ENCODE measurements at regions of chr1 and their contacts with region 1.

Region 1: DNA sequence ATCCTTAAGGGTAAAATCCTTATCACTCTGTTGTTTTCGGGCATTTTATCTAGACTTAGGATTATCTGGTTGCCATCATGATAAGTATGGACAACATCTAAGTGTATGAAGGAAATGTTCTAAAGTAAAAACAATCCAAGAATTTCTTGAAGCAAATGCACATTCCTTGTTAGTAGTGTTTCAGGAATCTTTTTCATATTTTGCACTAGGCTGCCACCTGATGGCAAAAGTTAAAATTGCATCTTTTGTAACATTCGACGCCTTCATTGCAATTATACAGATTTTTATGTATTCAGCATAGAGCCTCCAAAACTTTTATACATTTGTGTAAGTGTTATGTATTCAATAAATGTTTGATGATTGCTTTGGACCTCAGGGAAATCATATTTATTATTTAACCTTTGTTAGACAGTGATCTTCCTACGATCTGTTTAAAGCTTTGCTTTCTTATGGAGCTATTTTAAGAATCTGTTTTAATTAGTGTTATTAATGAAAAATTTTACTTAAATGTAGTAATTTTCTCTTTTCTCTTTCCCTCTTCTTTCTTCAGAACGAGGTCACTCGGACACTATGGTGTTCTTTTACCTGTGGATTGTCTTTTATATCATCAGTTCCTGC is 49.4 kb upstream of the KIAA1614 start:
- DNase-seq: no peak
- H3K4me3 Mint-ChIP-seq: no peak overlapping the region
- H3K27ac Mint-ChIP-seq: no peak overlapping the region
- H3K4me1 Mint-ChIP-seq: no peaks in the 10 kb centered on the region
- H3K27me3 Mint-ChIP-seq: no peaks in the 10 kb centered on the region

Region 2: GRCh38 chr1:180515864-180516388 is 347.3 kb before region 1 on chr1:
- CTCF ChIA-PET with region 1: interaction called, 68 read pairs
- DNase-seq: peak; percentile 68
- H3K4me3 Mint-ChIP-seq: no peak overlapping the region
- H3K27ac Mint-ChIP-seq: no peak overlapping the region
- H3K4me1 Mint-ChIP-seq: peaks cover 3% of the 10 kb centered on the region
- H3K27me3 Mint-ChIP-seq: peaks cover 17% of the 10 kb centered on the region

Region 3: DNA sequence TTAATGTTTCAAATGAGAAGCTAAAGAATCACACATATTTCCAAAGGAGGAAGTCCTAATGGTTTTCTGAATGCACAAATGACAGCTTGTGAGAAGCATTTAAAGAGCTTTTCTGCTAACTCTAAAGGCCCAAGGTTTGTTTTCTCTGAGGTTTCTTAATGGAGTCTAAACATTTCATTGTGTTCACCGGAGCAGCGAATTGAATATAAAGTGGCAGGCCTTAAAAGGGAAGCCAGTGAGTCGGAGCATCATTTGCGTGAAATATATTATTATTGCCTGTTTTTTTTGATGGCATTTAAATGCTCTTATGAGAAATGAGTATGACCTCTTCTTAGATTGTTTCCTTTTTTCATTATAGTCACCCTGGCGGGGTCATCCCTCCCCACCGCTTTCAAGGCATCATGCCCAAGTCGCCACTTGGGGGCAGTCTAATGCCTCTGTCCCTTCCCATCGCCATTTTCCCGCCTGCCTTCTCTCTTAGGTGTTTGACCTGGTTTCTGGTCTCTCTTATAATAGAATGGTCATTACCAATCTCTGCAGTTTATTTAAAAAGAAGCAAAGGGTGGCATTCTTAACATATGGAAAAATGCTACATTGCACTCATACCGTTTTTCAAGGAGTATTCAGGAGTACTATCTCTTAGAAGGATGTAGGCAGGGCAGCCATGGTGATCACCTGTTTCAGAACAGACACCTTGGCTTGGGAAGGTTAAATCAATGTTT is 329.8 kb before region 1 on chr1:
- CTCF ChIA-PET with region 1: interaction called, 129 read pairs
- DNase-seq: peak; percentile 78
- H3K4me3 Mint-ChIP-seq: no peak overlapping the region
- H3K27ac Mint-ChIP-seq: no peak overlapping the region
- H3K4me1 Mint-ChIP-seq: no peaks in the 10 kb centered on the region
- H3K27me3 Mint-ChIP-seq: peaks cover 22% of the 10 kb centered on the region

Region 4: GRCh38 chr1:180636138-180636537 is 227.1 kb before region 1 on chr1:
- CTCF ChIA-PET with region 1: interaction called, 16 read pairs
- DNase-seq: no peak
- H3K4me3 Mint-ChIP-seq: no peak overlapping the region
- H3K27ac Mint-ChIP-seq: no peak overlapping the region
- H3K4me1 Mint-ChIP-seq: peaks cover 6% of the 10 kb centered on the region
- H3K27me3 Mint-ChIP-seq: no peaks in the 10 kb centered on the region

Region 5: DNA sequence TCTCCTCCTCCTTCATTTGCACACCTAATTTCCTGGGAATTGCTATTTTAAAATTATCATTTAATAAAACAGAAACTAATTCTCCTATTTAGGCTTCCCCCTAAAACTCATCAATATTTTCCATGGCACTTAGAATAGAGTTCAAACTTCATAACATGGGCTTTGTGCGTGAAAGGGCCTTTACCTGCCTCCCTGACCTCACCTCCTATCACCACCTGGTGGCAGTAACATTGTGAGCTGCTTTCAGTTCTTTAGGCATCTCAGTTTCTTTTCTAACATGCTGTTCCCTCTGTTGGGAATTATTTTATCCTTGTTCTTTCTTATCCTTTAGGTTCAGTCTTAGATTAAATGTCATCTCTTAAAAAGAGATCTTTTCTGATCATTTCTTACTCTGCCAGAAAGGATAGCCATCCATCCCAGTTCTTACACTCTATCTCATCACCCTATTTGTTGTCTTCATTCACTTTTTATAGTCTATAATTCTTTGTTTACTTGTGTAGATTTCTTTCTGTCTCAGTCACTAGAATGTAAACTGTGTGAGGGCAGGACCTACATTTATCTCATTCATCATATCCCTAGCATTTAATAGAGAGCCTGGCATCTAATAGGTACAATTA is 84.4 kb before region 1 on chr1:
- CTCF ChIA-PET with region 1: interaction called, 12 read pairs
- DNase-seq: peak; percentile 33
- H3K4me3 Mint-ChIP-seq: no peak overlapping the region
- H3K27ac Mint-ChIP-seq: no peak overlapping the region
- H3K4me1 Mint-ChIP-seq: no peaks in the 10 kb centered on the region
- H3K27me3 Mint-ChIP-seq: no peaks in the 10 kb centered on the region

Measured in activated naive CD4-positive, alpha-beta T cell treated with anti-CD3 and anti-CD28 coated beads, Interleukin-2, amount 10 ng/mL, durations not matched to agents 7 days and 5 days (primary cell).